Dorsolateral prefrontal cortex (tissue), 120 donors: ENCODE measurements at regions of chr19 and their contacts with region 1.

Region 1: GRCh38 chr19:56140583-56141416 is at the start of gene ZNF444:
- DNase-seq: peak; percentile 97 to 100 (median 99)
- H3K4me3 ChIP-seq: peak within 1 kb of the TSS; percentile 42 to 98 (median 75)
- H3K27ac ChIP-seq: peak within 1 kb of the TSS; percentile 58 to 96 (median 89)
- H3K27me3 ChIP-seq: no peaks in the 10 kb centered on the region
- CTCF ChIP-seq: peak in 13 of 56 donors; percentile 3 to 32 (median 15)
- total RNA-seq, gene ZNF444: 35.5 to 110 (median 56.7) TPM

Region 2: GRCh38 chr19:56121180-56122167 is 19.3 kb before region 1 on chr19 and contains the start of gene ZNF787:
- intact Hi-C with region 1: loop called (anchors 1 kb)
- DNase-seq: peak; percentile 95 to 99 (median 98)
- H3K4me3 ChIP-seq: peak within 1 kb of the TSS; percentile 51 to 89 (median 81)
- H3K27ac ChIP-seq: peak within 1 kb of the TSS; percentile 19 to 96 (median 90)
- H3K27me3 ChIP-seq: no peaks in the 10 kb centered on the region
- CTCF ChIP-seq: peak in 41 of 56 donors; percentile 4 to 53 (median 30)
- total RNA-seq, gene ZNF787: 18.4 to 49.8 (median 26.0) TPM

Region 3: GRCh38 chr19:56193981-56194640 is 53.3 kb after region 1 on chr19:
- intact Hi-C with region 1: no loop called
- DNase-seq: no peak
- H3K4me3 ChIP-seq: no peak overlapping the region
- H3K27ac ChIP-seq: no peak overlapping the region
- H3K27me3 ChIP-seq: no peaks in the 10 kb centered on the region
- CTCF ChIP-seq: no peak

Region 4: GRCh38 chr19:56314562-56315077 is 173.8 kb after region 1 on chr19 and contains the start of gene ZSCAN5A:
- intact Hi-C with region 1: loop called (anchors 2 to 5 kb)
- DNase-seq: peak; percentile 96 to 98 (median 98)
- H3K4me3 ChIP-seq: peak within 1 kb of the TSS; percentile 57 to 97 (median 82)
- H3K27ac ChIP-seq: peak within 1 kb of the TSS; percentile 84 to 100 (median 98)
- H3K27me3 ChIP-seq: no peaks in the 10 kb centered on the region
- CTCF ChIP-seq: peak in 2 of 56 donors; percentile 14 to 18
- total RNA-seq, gene ZSCAN5A: 9.6 to 36.8 (median 16.9) TPM

Region 5: DNA sequence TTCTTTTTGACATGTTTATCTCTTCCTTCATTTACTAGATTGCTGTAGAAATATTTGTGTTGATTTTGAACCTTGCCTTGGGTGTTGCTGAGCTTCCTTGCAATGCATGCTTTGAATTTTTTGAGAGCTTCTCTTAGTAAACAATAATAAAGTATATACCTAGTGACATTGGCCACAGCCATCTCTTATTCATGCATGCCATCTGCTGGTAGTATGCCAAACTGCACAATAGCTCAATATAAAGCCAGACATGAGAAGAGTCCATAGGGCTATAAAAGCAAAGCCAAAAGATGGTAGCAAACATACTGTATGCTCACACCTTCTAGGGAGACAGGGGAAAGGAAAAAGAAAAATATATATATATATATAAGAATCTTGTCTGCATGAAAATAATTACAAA is 192.7 kb after region 1 on chr19:
- intact Hi-C with region 1: no loop called
- DNase-seq: no peak
- H3K4me3 ChIP-seq: no peak overlapping the region
- H3K27ac ChIP-seq: no peak overlapping the region
- H3K27me3 ChIP-seq: no peaks in the 10 kb centered on the region
- CTCF ChIP-seq: peak in 49 of 56 donors; percentile 15 to 63 (median 38)